SK-N-SH (cell line): ENCODE measurements at regions of chr12 and their contacts with region 1.

Region 1: DNA sequence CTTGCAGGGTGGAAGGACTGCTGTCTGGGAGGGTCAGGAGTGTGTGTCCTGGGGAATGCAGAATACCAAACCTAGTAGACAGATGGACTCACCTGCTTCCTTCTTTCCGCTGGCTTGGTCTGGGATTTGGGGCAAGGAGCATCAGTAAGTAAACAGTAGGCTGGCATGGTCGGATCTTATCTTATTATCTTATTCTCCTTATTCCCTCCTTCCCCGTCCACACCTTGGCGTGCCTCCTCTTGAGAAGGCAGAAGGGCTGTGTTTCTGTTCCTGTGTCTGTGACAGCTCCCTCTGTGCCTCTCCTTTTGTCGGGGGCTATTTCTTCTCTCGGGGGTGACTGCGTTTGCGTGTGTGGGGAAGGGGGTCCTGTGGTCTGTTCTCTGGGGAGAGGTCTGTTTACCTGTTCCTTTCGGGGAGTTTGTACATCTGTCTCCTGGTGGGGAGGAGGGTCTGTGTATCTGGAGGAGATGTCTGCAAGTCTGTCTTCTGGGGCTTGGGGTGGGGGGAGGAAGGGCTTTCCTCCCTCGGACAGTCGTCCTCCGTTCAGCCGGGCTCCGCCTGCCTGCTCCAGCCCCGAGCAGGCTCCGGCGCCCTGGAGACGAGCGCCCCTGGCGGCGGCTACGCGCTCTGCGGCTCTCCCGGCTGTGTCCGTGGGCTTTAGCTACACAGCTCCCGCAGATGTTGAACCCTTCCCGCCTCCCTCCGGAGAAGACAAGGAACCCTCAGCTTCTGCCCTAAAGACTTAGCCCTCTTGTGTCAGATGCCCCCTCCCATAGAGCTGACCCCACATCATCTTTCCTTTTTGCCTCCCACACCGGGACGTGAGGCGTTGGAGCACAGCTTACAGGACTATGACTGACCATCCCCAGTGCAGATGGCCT is 4.3 kb downstream of the KRT86 start:
- DNase-seq: peak; percentile 92
- H3K4me3 ChIP-seq: peak overlapping the region; percentile 14 to 31
- H3K27ac ChIP-seq: peak overlapping the region in 1 of 2 experiments; percentile 97; a peak in 2 of 4 replicates
- H3K4me1 ChIP-seq: peaks cover 11 to 28% of the 10 kb centered on the region in 2 experiments; a peak in 3 of 4 replicates
- H3K27me3 ChIP-seq: no peaks in the 10 kb centered on the region
- CTCF ChIP-seq: peak; percentile 97
- EP300 ChIP-seq: no peak
- RAD21 ChIP-seq: peak; percentile 84

Region 2: GRCh38 chr12:51970904-51971646 is 307.7 kb before region 1 on chr12:
- CTCF ChIA-PET with region 1: no interaction called
- POLR2A ChIA-PET with region 1: no interaction called
- DNase-seq: peak; percentile 57
- H3K4me3 ChIP-seq: no peak overlapping the region
- H3K27ac ChIP-seq: no peak overlapping the region
- H3K4me1 ChIP-seq: peaks cover 31% of the 10 kb centered on the region in 2 experiments; a peak in 3 of 4 replicates
- H3K27me3 ChIP-seq: no peaks in the 10 kb centered on the region
- CTCF ChIP-seq: peak; percentile 67
- EP300 ChIP-seq: no peak
- RAD21 ChIP-seq: peak; percentile 16; the same call in 1 of the 2 replicates

Region 3: DNA sequence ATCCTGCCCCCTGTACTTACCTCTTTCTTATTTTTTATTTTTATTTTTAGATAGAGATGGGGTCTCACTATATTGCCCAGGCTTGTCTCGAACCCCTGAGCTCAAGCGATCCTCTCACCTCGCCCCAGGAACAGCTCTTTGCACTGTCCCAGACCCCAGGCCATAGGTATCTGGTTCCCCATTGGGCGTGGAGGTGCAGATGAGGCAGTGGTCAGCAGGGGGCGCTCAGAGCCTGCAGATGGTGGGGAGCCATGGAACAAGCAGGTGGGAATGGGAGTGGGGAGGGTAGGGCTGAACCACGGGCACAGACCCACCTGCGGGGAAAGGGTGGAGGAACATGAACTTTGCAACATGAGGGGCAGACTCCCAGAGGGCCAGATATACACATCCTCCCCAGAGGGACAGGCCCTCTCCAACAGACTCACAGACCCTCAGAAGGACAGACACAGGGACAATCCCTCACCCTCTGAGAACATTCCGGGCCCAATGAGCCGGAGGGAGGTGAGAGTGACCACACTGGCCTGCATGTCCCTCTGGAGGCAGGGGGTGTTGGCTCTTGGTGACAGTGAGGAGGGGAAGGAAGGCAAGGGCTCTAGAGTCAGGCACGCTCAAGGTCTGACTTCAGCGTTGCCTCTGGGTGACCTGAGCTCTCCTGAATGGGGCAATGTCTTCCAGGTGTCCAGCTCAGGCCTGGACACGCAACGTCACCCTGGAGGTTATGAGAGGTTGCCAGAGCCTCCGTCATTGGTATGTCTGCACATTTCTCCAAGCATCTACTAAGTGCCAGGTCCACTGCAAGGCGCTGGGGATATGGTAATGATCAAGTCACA is 121.8 kb before region 1 on chr12:
- CTCF ChIA-PET with region 1: interaction called, 13 read pairs
- POLR2A ChIA-PET with region 1: no interaction called
- DNase-seq: peak; percentile 92
- H3K4me3 ChIP-seq: no peak overlapping the region; a peak in 1 of 4 replicates
- H3K27ac ChIP-seq: no peak overlapping the region
- H3K4me1 ChIP-seq: no peaks in the 10 kb centered on the region
- H3K27me3 ChIP-seq: no peaks in the 10 kb centered on the region
- CTCF ChIP-seq: peak; percentile 98
- EP300 ChIP-seq: no peak
- RAD21 ChIP-seq: peak; percentile 99

Region 4: GRCh38 chr12:52203075-52203921 is 75.5 kb before region 1 on chr12:
- CTCF ChIA-PET with region 1: interaction called, 13 read pairs
- POLR2A ChIA-PET with region 1: no interaction called
- DNase-seq: peak; percentile 63
- H3K4me3 ChIP-seq: peak overlapping the region in 1 of 2 experiments; percentile 4; a peak in 1 of 4 replicates
- H3K27ac ChIP-seq: peak overlapping the region; percentile 49 to 100
- H3K4me1 ChIP-seq: peaks cover 34 to 84% of the 10 kb centered on the region in 2 experiments
- H3K27me3 ChIP-seq: no peaks in the 10 kb centered on the region
- CTCF ChIP-seq: no peak
- EP300 ChIP-seq: peak in 1 of 2 experiments; percentile 54; a peak in 1 of 4 replicates
- RAD21 ChIP-seq: no peak

Region 5: DNA sequence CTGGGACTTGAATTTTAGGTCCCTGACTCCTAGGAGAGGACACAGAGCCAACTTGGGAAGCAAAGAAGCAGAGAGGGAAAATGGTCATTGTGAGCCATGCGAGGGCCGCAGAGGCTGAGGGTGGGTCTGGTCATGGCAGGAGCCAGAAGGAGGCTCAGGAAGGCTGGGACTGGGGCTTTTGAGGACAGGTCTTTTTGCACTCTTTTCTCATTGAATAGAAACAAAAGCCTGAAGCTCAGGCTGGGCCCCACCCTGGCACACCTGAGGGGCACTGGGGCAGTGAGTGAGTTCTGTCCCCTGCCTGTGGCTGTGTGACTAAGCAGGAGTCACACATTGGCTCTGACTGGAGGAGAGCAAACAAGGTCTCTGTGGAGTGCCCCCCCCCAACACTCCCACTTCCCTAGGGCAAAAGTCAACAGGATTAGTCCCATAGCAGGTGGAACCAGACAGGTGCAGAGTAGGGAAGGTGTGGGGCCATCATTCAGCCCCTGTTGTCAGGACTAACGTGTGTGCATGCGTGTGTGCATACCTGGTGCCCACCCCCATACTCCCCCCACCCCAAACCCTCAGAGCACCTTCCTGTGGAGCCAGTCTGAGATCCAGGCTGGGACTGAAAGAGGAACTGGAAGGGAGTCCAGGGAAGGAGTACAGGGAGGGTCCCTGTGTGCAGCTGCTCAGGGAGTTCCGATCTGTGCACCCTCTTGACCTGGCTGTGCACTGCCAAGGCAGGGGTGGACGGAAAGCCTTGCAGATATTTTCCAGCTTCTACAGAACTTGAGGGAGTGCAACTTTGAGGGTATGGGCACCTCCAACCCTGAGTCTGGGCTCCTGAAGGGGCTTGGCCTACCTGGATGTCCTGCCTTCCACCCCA is 42.7 kb before region 1 on chr12:
- CTCF ChIA-PET with region 1: interaction called, 18 read pairs
- POLR2A ChIA-PET with region 1: no interaction called
- DNase-seq: peak; percentile 20
- H3K4me3 ChIP-seq: no peak overlapping the region
- H3K27ac ChIP-seq: no peak overlapping the region
- H3K4me1 ChIP-seq: peaks cover 0 to 3% of the 10 kb centered on the region in 2 experiments; a peak in 2 of 4 replicates
- H3K27me3 ChIP-seq: no peaks in the 10 kb centered on the region
- CTCF ChIP-seq: no peak
- EP300 ChIP-seq: no peak
- RAD21 ChIP-seq: no peak

Region 6: DNA sequence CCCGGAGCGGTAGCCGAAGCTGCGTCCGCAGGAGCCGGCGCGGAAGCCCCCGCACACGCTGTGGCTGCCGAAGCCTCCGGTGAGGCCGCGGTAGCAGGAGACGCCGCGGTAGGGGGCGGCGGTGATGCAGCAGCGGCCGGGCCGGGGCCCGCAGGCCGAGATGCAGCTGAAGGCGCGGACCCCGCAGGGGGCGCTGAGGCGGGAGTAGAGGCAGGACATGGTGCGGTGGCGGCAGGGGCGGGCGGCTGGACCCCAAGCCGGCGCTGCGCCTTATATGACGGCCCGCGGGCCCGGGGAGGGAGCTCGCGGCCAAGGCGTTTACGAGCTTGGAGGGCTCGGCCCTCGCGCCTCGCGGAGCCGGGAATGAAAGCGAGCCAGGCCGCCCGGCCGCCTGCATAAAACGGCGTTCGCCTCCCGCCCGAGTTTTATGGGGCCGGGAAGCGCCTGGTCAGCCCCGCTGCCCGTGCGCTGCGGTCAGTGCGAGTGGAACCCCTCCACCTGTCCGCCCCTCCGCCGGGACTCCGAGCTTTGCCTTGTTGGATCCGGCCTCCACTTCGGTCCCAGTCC is 20.4 kb before region 1 on chr12:
- CTCF ChIA-PET with region 1: interaction called, 80 read pairs
- POLR2A ChIA-PET with region 1: no interaction called
- DNase-seq: peak; percentile 82
- H3K4me3 ChIP-seq: peak overlapping the region in 1 of 2 experiments; percentile 17; a peak in 1 of 4 replicates
- H3K27ac ChIP-seq: no peak overlapping the region
- H3K4me1 ChIP-seq: peaks cover 3 to 16% of the 10 kb centered on the region in 2 experiments; a peak in 3 of 4 replicates
- H3K27me3 ChIP-seq: no peaks in the 10 kb centered on the region
- CTCF ChIP-seq: no peak
- EP300 ChIP-seq: no peak
- RAD21 ChIP-seq: no peak

Region 7: GRCh38 chr12:52307836-52308805 is 29.3 kb after region 1 on chr12:
- CTCF ChIA-PET with region 1: interaction called, 30 read pairs
- POLR2A ChIA-PET with region 1: no interaction called
- DNase-seq: peak; percentile 89
- H3K4me3 ChIP-seq: peak overlapping the region; percentile 29 to 39; a peak in 3 of 4 replicates
- H3K27ac ChIP-seq: no peak overlapping the region
- H3K4me1 ChIP-seq: peaks cover 0 to 9% of the 10 kb centered on the region in 2 experiments; a peak in 1 of 4 replicates
- H3K27me3 ChIP-seq: no peaks in the 10 kb centered on the region
- CTCF ChIP-seq: no peak
- EP300 ChIP-seq: no peak
- RAD21 ChIP-seq: no peak; the same call in 1 of the 2 replicates

Region 8: GRCh38 chr12:52338241-52338960 is 59.6 kb after region 1 on chr12:
- CTCF ChIA-PET with region 1: interaction called, 13 read pairs
- POLR2A ChIA-PET with region 1: no interaction called
- DNase-seq: no peak
- H3K4me3 ChIP-seq: no peak overlapping the region
- H3K27ac ChIP-seq: no peak overlapping the region
- H3K4me1 ChIP-seq: peaks cover 0 to 9% of the 10 kb centered on the region in 2 experiments; a peak in 2 of 4 replicates
- H3K27me3 ChIP-seq: peaks cover 32% of the 10 kb centered on the region
- CTCF ChIP-seq: no peak
- EP300 ChIP-seq: no peak
- RAD21 ChIP-seq: no peak